ENCODE measurements at regions of chr12 and their contacts with region 1.

Region 1: DNA sequence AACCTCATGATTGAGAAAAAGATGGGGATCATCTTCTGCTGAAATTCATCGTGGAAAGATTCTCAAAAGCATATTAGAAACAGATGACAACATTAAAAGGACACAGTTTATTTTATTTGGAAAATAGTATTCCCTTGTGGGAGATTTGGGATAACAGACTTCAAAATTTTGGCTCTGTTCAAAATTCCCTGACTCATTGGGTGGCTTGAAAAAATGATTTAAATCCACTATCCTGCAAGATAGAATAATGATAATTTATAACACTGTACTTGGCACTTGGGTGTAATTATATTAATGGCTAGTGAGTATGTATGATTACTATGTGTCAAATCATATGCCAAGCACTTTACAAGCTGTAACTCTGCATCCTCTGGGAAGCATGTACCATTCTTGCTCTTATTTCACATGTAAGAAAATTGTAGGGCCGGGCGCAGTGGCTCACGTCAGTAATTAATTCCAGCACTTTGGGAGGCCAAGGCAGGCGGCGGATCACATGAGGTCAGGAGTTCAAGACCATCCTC is 128.8 kb downstream of the LMNTD1 start:
- DNase-seq: no peak

Region 2: DNA sequence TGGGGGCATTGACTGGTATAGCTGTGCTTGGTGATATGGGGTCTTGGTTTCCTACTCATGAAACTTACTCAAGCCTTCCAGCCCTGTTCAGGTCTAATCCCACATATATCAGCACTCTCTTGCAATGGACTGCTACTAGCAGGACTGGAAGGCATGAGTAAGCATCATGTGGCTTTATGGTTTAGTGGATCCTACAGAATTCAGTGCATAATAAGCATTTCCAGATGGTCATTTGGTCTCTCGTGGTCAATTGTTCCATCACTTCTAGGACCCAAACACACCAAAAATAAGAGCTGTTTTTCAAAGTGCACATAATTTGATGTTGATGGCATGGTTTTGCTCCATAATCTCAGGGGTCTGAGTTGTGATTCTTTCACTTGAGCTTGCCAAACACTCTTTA is 14.4 kb after region 1 on chr12:
- intact Hi-C with region 1: no loop called
- DNase-seq: no peak

Region 3: DNA sequence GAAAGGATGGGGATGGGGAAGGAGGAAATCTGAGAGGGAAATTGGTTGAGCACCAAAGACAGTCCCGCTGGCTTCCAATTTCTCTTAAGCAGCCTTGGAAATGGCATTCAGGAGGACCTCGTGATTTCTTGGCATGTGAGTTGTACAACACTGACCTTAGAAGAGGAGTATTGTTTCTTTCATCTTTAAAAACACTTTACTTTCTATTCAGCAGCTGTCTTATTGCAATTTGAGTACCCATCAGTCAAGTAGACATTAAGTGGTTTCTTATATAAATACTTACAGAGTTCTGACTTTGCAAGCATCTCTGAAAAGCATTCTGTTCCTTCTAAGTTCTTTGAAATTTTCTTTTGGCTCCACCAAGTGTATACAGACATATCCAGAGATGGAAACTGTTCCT is 45.6 kb after region 1 on chr12:
- intact Hi-C with region 1: loop called (anchors 2 kb)
- DNase-seq: no peak